ENCODE measurements at regions of chr11 and their contacts with region 1.

Region 1: DNA sequence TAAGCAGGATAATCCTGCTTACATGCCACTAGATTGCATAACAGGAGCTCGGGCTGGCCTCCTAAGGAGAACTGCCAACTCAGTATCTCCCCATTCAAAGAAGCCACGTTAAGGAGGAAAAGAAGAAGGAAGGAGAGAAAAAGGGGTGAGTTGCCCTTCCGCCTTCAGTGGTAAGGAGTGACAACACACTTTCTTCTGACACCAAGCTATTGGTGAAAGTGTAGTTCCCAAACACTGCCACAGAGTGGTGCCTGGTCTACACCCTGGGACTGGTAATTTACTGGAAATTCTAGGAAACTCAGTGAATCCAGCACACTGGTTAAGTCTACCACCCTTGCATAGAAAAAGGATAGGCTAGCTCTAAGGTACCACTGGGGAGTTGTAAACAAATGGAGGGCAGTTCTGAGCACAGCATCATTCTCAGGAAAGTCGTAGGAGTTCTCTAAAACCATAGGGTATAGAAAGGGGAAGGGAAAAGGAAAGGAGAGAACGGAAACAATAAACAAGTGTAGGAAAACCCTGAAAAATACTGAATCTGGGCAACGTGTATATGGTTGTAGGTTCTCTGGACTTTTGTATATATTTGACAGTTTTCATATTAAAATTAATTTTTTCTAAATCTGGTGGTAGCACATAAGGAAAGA is 58.2 kb downstream of the RRAS2 start:
- DNase-seq: peak; percentile 69 to 75
- ATAC-seq: peak; percentile 97 to 98
- H3K4me3 ChIP-seq: no peak overlapping the region
- H3K27ac ChIP-seq: peak overlapping the region in 1 of 2 experiments; percentile 65; a peak in 3 of 6 replicates
- H3K4me1 ChIP-seq: peaks cover 7% of the 10 kb centered on the region; the same call in 2 of the 3 replicates
- CTCF ChIP-seq: peak; percentile 91
- EP300 ChIP-seq: no peak
- POLR2A ChIP-seq: no peak
- RAD21 ChIP-seq: peak; percentile 92 to 96

Region 2: GRCh38 chr11:14107050-14107430 is 193.7 kb before region 1 on chr11:
- CTCF ChIA-PET with region 1: no interaction called
- POLR2A ChIA-PET with region 1: no interaction called
- DNase-seq: no peak
- ATAC-seq: no peak
- H3K4me3 ChIP-seq: no peak overlapping the region
- H3K27ac ChIP-seq: no peak overlapping the region
- H3K4me1 ChIP-seq: no peaks in the 10 kb centered on the region
- CTCF ChIP-seq: no peak
- EP300 ChIP-seq: no peak
- POLR2A ChIP-seq: no peak
- RAD21 ChIP-seq: no peak

Region 3: GRCh38 chr11:14237444-14237961 is 63.3 kb before region 1 on chr11:
- CTCF ChIA-PET with region 1: no interaction called
- POLR2A ChIA-PET with region 1: no interaction called
- DNase-seq: no peak
- ATAC-seq: no peak
- H3K4me3 ChIP-seq: no peak overlapping the region
- H3K27ac ChIP-seq: no peak overlapping the region
- H3K4me1 ChIP-seq: no peaks in the 10 kb centered on the region
- CTCF ChIP-seq: no peak
- EP300 ChIP-seq: no peak
- POLR2A ChIP-seq: no peak
- RAD21 ChIP-seq: no peak

Region 4: DNA sequence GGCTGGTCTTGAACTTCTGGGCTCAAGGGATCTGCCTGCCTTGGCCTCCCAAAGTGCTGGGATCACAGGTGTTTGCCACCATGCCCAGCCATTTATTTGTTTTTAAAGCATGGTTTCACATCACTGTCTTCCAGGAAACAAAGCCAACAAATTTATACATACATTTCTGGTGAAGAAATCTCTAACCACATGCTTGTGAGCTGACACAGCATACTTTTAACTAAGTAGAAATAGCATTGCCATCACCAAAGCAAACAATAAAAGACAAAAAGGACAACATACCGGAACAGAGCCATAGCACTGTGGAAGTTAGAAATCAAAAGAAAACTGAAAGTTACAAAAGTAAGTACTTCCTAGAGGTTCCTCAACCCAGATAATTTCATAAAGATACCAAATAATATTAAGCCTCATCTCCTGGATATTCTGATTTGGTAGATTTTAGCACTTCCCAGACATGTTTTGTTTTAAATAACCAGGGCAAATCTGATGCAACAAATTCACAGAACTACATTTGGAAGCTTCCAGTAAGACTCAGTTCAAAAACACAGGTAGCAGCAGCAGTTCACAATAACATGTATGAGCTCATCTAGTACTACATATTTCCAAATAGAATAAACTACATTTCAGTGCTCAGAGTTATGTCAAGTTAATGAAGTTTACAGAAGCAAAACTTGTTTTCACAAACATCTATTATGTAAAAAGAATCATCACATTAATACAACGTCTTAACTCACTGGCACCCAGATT is 12.4 kb before region 1 on chr11:
- CTCF ChIA-PET with region 1: interaction called, 19 read pairs
- POLR2A ChIA-PET with region 1: no interaction called
- DNase-seq: peak in 1 of 2 experiments; percentile 54
- ATAC-seq: peak; percentile 77 to 80
- H3K4me3 ChIP-seq: no peak overlapping the region
- H3K27ac ChIP-seq: peak overlapping the region; percentile 59 to 66
- H3K4me1 ChIP-seq: peaks cover 19% of the 10 kb centered on the region
- CTCF ChIP-seq: no peak
- EP300 ChIP-seq: no peak
- POLR2A ChIP-seq: no peak
- RAD21 ChIP-seq: no peak

Region 5: GRCh38 chr11:14334893-14335292 is 34.1 kb after region 1 on chr11:
- CTCF ChIA-PET with region 1: interaction called, 11 read pairs
- POLR2A ChIA-PET with region 1: no interaction called
- DNase-seq: no peak
- ATAC-seq: no peak
- H3K4me3 ChIP-seq: no peak overlapping the region
- H3K27ac ChIP-seq: no peak overlapping the region; a peak in 1 of 6 replicates
- H3K4me1 ChIP-seq: peaks cover 12% of the 10 kb centered on the region; the same call in 2 of the 3 replicates
- CTCF ChIP-seq: no peak
- EP300 ChIP-seq: no peak
- POLR2A ChIP-seq: no peak
- RAD21 ChIP-seq: no peak

Region 6: GRCh38 chr11:14370496-14370895 is 69.7 kb after region 1 on chr11:
- CTCF ChIA-PET with region 1: interaction called, 11 read pairs
- POLR2A ChIA-PET with region 1: no interaction called
- DNase-seq: no peak
- ATAC-seq: no peak
- H3K4me3 ChIP-seq: no peak overlapping the region
- H3K27ac ChIP-seq: no peak overlapping the region
- H3K4me1 ChIP-seq: peaks cover 14% of the 10 kb centered on the region
- CTCF ChIP-seq: no peak
- EP300 ChIP-seq: no peak
- POLR2A ChIP-seq: no peak
- RAD21 ChIP-seq: no peak

Region 7: DNA sequence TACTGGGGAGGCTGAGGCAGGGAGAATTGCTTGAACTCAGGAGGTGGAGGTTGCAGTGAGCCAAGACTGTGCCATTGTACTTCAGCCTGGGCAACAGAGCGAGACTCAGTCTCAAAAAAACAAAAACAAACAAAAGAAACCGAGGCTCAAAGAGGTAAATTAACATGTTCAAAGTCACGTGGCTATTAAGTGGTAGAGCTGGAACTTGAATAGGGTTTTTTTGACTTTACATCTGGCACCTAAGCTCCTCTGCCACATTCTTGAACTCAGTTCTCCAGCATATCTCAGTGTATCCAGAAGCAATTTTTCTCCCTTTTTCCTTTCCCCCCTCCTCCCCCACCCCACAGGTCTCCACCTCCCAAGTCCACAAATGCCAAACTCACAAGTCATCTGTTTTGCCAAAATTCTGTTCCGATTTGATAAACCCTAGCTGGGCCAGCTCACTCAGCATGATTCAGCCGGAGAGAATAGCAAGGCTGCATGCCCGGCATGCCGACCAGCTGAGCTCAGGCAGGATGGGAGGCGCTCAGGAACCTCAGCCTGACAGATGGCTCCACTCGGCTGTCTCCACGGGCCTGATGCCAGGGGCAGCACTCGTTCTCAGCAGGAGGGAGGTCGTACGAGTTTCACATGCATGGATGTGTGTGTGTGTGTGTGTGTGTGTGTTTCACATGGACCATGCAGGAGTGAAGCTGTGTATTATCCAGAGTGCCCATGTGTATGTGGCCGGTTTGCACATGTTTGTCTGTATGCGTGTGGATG is 121.5 kb after region 1 on chr11:
- CTCF ChIA-PET with region 1: interaction called, 127 read pairs
- POLR2A ChIA-PET with region 1: interaction called, 6 read pairs
- DNase-seq: peak; percentile 85 to 88
- ATAC-seq: peak; percentile 97 to 98
- H3K4me3 ChIP-seq: no peak overlapping the region
- H3K27ac ChIP-seq: peak overlapping the region; percentile 75 to 85
- H3K4me1 ChIP-seq: peaks cover 37% of the 10 kb centered on the region
- CTCF ChIP-seq: no peak
- EP300 ChIP-seq: peak in 1 of 2 experiments; percentile 63; a peak in 1 of 5 replicates
- POLR2A ChIP-seq: no peak
- RAD21 ChIP-seq: no peak

Region 8: DNA sequence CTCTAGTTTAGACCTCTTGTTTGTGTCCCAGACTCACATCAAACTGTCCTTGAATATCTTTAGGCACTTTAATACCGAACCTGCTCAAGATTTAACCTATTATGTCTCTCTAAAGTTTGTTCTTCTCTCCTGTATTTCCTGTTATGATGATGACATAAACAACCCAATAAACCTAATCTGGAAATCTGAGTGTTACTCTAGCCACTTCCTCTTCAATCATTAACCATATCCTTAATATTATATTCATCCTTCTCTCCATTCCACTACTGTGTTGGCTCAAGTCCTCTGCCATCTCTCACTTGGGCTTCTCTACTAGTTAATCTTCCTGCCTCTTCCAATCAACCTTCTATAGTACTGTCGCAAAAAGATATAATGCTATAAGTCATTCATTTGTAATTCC is 162.8 kb after region 1 on chr11:
- CTCF ChIA-PET with region 1: interaction called, 258 read pairs
- POLR2A ChIA-PET with region 1: no interaction called
- DNase-seq: no peak
- ATAC-seq: no peak
- H3K4me3 ChIP-seq: no peak overlapping the region
- H3K27ac ChIP-seq: no peak overlapping the region
- H3K4me1 ChIP-seq: no peaks in the 10 kb centered on the region
- CTCF ChIP-seq: no peak
- EP300 ChIP-seq: no peak
- POLR2A ChIP-seq: no peak
- RAD21 ChIP-seq: no peak